Breast epithelium (tissue), 4 donors: ENCODE measurements at regions of chr2 and their contacts with region 1.

Region 1: DNA sequence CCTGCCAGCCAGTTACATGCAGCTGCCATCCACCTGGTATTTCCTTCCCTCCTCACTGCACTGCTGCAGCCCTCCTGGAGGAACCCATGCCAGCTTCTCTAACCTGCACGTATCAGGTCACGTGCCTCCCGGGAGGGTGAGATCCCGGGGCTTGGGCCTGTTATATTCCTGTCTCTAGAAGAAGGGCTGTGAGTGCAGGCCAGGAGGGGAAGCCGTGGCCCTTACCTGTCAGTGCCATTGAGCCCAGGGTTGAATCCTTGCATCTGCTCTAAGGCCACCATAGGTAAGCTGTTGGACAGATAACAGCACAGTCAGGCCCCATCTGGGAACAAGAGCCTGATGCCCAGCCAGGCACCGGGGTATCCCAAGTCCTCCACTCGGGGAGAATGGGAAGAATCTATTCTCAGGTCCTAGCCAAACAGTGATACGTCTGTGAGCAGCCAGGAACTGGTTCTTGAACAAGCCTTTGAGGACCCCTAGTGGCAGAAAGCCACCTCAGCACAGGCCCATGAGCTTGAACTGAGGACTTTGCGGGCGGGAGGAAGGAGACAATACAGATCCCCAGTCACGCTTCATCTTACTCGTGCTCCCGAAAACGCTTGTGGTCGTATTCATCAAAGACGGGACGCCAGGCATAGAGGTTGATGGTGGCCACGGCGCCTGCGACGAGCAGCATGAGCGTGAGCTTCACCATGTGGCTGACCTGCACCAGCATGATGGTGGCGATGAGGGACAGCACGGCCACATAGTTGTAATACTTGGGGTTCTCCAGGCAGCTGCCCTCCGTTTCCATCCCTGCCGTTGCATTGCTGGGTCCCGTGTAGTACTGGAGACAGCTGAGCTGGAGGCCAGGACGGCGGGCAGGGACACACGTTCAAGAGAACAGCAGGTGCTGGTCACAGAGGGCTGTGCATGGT is 34.4 kb downstream of the CENPO start:
- DNase-seq: peak; percentile 73 to 81
- H3K4me3 ChIP-seq: no peak overlapping the region
- H3K27ac ChIP-seq: no peak overlapping the region
- H3K4me1 ChIP-seq: no peaks in the 10 kb centered on the region
- H3K27me3 ChIP-seq: no peaks in the 10 kb centered on the region
- CTCF ChIP-seq: peak; percentile 61 to 93 (median 87)
- POLR2A ChIP-seq: no peak

Region 2: GRCh38 chr2:24409700-24410556 is 417.7 kb before region 1 on chr2:
- intact Hi-C with region 1: loop called (anchors 10 kb)
- DNase-seq: peak in 1 of 2 donors; percentile 32
- H3K4me3 ChIP-seq: no peak overlapping the region
- H3K27ac ChIP-seq: no peak overlapping the region
- H3K4me1 ChIP-seq: no peaks in the 10 kb centered on the region
- H3K27me3 ChIP-seq: no peaks in the 10 kb centered on the region
- CTCF ChIP-seq: peak; percentile 75 to 91 (median 76)
- POLR2A ChIP-seq: no peak

Region 3: DNA sequence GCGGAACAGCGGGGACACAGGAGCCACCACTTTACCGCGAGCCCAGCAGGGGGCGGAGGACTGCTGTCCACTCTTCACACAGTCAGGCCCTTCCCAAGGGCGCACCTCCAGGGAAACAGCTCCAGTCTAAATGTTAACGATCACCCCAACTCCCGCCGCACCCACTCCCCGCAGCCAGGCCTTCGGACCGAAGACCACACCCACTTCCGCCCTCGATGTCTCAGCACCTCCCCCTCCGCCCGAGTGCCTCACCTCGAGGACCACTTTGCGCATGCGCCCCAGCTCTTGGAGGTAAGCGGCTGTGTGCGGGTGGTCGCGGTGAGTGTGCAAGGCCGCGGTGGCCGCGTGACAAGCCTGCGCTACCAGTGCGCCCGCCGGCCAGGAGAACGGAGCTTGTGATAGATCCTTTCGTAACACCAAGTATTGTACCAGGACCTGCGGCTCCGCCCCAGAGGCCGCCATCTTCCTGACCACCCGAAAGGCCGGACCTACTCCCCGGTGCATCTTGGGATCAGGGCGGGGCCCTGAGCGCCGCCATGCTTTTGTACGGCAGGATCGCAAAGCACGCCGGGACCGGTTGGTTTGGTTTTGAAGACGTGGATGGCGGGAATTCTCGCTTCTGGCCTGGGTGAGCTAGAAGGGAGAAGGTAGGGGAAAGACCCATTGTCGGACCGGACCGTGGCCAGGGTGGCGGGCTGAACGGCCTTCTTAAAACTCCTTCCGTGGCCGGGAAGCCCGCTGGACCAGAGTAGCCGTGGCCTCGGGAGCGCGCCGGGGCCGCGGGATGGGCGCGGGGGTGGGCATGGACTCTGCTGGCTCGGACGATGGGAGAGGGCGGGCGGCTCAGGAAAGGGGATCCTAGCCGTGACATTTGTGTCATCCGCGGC is 34.5 kb before region 1 on chr2 and contains the starts of genes CENPO and PTRHD1:
- intact Hi-C with region 1: no loop called
- DNase-seq: peak; percentile 95 to 96
- H3K4me3 ChIP-seq: peak within 1 kb of the TSS; percentile 57 to 88 (median 71)
- H3K27ac ChIP-seq: peak within 1 kb of the TSS; percentile 98 to 99
- H3K4me1 ChIP-seq: peaks cover 0 to 3% of the 10 kb centered on the region in 2 donors
- H3K27me3 ChIP-seq: no peaks in the 10 kb centered on the region
- CTCF ChIP-seq: peak; percentile 37 to 69 (median 60)
- POLR2A ChIP-seq: no peak
- total RNA-seq, gene CENPO: 1.6 to 4.2 (median 1.8) TPM
- total RNA-seq, gene PTRHD1: 19.3 to 38.8 (median 37.9) TPM

Region 4: DNA sequence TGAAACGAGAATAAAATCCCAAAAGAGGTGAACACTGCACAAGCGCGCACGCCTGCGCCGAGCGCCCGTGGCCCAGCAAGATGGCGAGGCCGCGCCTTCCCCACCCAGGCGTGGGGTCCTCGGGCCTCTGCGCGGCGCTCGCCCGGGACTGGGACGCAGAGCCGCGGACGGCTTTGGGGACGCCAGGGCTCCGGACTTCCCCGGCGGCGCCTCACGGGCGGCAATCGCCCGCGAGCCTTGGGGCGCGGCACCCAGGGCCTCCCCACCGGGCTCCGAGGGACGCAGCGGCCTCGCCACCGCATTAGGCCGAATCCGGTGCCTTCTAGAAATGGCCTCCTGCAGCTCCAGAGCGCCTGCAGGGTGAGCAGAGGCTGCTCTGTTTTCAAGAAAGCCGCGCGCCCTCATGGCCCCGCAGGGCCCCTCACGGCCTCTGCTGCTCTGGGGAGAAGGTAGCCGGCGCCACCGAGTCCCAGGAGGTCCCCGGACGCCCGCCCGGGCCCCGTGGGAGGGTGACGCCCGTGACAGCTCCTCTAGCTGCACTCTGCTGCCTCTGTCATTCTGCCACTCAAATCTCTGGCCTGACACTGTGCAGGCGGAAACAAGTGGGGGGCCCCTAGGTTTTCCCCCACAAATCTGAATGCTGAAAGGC is 376.7 kb after region 1 on chr2:
- intact Hi-C with region 1: no loop called
- DNase-seq: no peak
- H3K4me3 ChIP-seq: peak overlapping the region; percentile 18 to 57 (median 37)
- H3K27ac ChIP-seq: no peak overlapping the region
- H3K4me1 ChIP-seq: no peaks in the 10 kb centered on the region
- H3K27me3 ChIP-seq: no peaks in the 10 kb centered on the region
- CTCF ChIP-seq: no peak
- POLR2A ChIP-seq: no peak